ENCODE measurements at regions of chr4 and their contacts with region 1.

Region 1: DNA sequence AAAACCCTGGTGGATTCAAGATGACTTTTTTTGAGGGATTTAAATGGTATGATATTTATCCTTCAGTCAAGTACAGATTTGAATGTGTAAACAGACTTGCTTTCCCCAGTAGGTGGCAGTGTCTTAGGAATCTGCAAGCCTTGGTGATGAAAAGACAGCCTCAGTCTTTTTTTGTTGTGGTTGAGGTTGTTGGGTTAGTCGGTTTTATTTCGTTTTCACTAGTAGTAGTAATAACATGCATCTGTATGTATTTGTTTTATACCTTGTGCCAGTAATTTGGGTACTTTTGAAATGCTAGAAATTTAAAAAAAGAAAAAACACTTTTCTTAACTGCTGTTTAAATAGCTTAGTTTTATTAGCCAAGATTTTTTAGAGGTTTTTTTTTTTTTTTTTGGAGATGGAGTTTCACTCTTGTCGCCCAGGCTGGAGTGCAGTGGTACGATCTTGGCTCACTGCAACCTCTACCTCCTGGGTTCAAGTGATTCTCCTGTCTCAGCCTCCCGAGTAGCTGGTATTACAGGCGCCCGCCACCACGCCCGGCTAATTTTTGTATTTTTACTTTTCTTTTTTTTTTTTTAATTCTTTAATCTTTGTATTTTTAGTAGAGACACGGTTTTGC is 39.2 kb downstream of the COPS4 start:
- DNase-seq: peak; percentile 93
- H3K4me3 Mint-ChIP-seq: peak overlapping the region; percentile 2
- H3K27ac Mint-ChIP-seq: peak overlapping the region; percentile 43
- H3K4me1 Mint-ChIP-seq: peaks cover 11% of the 10 kb centered on the region
- H3K27me3 Mint-ChIP-seq: no peaks in the 10 kb centered on the region

Region 2: DNA sequence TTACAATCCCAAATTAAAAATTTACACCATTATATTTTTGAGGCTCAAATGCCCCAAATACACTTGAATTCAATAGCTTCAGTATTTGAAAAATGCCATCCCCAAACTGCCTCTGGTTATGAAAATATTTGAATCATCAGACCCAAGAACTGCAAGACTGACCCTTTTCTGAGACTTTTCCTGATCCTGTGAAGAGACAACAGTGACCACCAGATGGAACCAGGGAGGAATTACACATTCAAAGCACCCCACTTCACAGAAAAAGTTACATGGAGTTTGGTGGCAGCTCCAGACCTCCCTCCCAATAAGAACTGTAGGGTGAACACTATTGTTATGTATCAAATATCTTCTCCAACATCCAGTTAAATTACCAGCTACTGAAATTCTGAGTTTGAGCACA is 231.6 kb before region 1 on chr4:
- intact Hi-C with region 1: no loop called
- DNase-seq: no peak
- H3K4me3 Mint-ChIP-seq: no peak overlapping the region
- H3K27ac Mint-ChIP-seq: no peak overlapping the region
- H3K4me1 Mint-ChIP-seq: no peaks in the 10 kb centered on the region
- H3K27me3 Mint-ChIP-seq: no peaks in the 10 kb centered on the region

Region 3: GRCh38 chr4:83034630-83035494 is 39.3 kb before region 1 on chr4 and contains the start of gene COPS4:
- intact Hi-C with region 1: loop called (anchors 2 kb)
- DNase-seq: peak; percentile 98
- H3K4me3 Mint-ChIP-seq: peak within 1 kb of the TSS; percentile 90
- H3K27ac Mint-ChIP-seq: peak within 1 kb of the TSS; percentile 98
- H3K4me1 Mint-ChIP-seq: peaks cover 16% of the 10 kb centered on the region
- H3K27me3 Mint-ChIP-seq: peaks cover 6% of the 10 kb centered on the region
- total RNA-seq, gene COPS4: 36.5 and 37.5 TPM in 2 replicates

Region 4: GRCh38 chr4:83231620-83232076 is 157.5 kb after region 1 on chr4:
- intact Hi-C with region 1: loop called (anchors 1 kb)
- DNase-seq: peak; percentile 89
- H3K4me3 Mint-ChIP-seq: peak overlapping the region; percentile 48
- H3K27ac Mint-ChIP-seq: peak overlapping the region; percentile 52
- H3K4me1 Mint-ChIP-seq: peaks cover 55% of the 10 kb centered on the region
- H3K27me3 Mint-ChIP-seq: peaks cover 6% of the 10 kb centered on the region

Region 5: DNA sequence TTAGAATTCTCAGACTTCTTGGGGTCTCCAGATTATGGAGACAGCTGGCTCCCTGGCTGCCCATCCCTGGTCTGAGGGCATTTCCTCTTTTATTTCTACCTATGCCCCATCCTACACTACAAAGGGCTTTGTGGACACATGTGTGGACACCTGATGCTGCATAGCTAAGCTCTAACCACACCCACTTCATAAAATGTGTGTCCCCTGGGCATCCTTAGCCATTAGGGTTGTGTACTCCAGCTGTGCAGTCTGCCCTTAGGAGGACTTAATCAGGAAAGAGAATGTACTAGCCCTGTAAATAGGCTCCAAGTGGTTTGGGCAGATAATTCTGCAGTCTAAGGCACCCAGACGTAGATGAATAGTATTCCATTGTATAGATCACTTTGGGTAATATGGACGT is 163.4 kb after region 1 on chr4:
- intact Hi-C with region 1: loop called (anchors 1 kb)
- DNase-seq: no peak
- H3K4me3 Mint-ChIP-seq: no peak overlapping the region
- H3K27ac Mint-ChIP-seq: no peak overlapping the region
- H3K4me1 Mint-ChIP-seq: peaks cover 51% of the 10 kb centered on the region
- H3K27me3 Mint-ChIP-seq: peaks cover 33% of the 10 kb centered on the region

Region 6: GRCh38 chr4:83252782-83253405 is 178.7 kb after region 1 on chr4:
- intact Hi-C with region 1: loop called (anchors 2 kb)
- DNase-seq: peak; percentile 93
- H3K4me3 Mint-ChIP-seq: no peak overlapping the region
- H3K27ac Mint-ChIP-seq: no peak overlapping the region
- H3K4me1 Mint-ChIP-seq: peaks cover 24% of the 10 kb centered on the region
- H3K27me3 Mint-ChIP-seq: no peaks in the 10 kb centered on the region

Region 7: DNA sequence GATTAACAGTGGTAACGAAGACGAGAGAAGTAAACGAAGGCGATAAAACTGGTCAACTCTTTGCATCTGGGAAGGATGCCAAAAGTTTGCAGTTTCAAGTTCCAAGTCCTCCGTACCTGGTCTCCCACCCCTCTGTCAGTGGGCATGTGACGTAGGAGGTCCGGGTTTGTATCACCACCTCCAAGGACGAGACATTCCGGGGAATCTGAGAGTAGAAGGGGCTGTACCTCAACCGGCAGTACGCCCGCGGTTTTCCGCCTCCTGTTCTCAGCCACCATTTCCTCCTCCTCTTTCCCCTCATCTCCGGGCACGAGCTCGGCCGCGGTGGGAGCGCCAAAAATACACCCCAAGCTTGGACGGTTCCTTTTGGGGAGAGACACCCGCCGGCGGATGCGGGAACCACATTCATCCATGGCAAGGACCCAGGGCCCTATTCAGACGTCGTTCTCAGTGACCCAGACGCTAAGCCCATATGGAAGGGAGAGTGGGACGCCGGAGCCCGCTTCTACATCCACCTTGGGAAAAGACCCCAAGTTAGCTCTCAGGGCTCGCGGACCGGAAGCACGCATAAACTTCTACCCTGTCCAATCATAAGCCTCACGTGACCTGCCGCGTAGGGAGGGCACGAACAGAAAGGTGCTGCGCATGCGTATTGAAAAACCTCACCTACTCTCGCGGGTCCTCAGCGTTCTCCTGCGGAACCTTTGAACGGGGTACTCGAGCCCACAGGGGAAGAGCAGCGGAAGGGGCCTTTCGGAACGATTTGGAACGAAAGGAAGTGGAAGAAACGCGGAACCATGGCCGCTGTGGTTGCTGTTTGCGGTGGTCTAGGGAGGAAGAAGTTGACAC is 381.3 kb after region 1 on chr4 and contains the starts of genes HELQ and MRPS18C:
- intact Hi-C with region 1: loop called (anchors 2 kb)
- DNase-seq: peak; percentile 98
- H3K4me3 Mint-ChIP-seq: peak within 1 kb of the TSS; percentile 99
- H3K27ac Mint-ChIP-seq: peak within 1 kb of the TSS; percentile 100
- H3K4me1 Mint-ChIP-seq: peaks cover 26% of the 10 kb centered on the region
- H3K27me3 Mint-ChIP-seq: no peaks in the 10 kb centered on the region
- total RNA-seq, gene HELQ: 9.1 and 11.4 TPM in 2 replicates
- total RNA-seq, gene MRPS18C: 83.9 and 86.6 TPM in 2 replicates